ENCODE measurements at regions of chr2 and their contacts with region 1.

Region 1: DNA sequence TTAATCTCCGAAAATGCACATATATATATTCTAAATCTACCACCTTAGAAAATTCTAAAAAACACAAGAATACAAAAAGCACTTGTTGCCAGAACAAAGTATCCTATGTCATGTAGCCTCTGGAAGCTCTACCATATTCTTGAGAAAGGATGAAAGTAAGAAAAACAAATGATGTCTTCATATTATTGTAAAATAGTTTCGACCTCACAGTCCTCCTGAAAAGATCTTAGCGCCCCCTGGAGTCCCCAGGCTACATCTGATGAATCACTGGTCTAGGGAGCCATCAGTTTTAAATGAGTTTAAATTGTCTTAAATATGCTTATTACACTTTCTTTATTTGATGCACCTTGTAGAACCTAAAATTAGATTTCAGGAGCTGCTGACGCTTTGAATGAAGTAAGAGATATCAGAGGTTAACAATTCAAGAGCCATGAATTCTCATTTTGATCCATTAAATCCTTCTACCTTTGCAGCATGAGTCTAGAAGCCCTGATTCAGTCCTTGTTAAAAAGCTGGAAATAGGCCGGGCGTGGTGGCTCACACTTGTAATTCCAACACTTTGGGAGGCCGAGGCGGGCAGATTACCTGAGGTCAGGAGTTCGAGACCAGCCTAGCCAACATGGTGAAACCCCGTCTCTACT is 138.8 kb downstream of the MCFD2 start:
- DNase-seq: peak; percentile 71
- H3K4me3 ChIP-seq: no peak overlapping the region
- H3K27ac ChIP-seq: peak overlapping the region in 1 of 2 experiments; percentile 60; a peak in 1 of 4 replicates
- H3K4me1 ChIP-seq: peaks cover 7 to 37% of the 10 kb centered on the region in 2 experiments; a peak in 2 of 4 replicates
- H3K27me3 ChIP-seq: no peaks in the 10 kb centered on the region
- CTCF ChIP-seq: peak; percentile 94
- EP300 ChIP-seq: no peak
- RAD21 ChIP-seq: peak; percentile 80

Region 2: GRCh38 chr2:46657042-46657504 is 119.7 kb before region 1 on chr2:
- CTCF ChIA-PET with region 1: interaction called, 53 read pairs
- POLR2A ChIA-PET with region 1: no interaction called
- DNase-seq: peak; percentile 52
- H3K4me3 ChIP-seq: no peak overlapping the region
- H3K27ac ChIP-seq: no peak overlapping the region
- H3K4me1 ChIP-seq: peaks cover 7 to 18% of the 10 kb centered on the region in 2 experiments; a peak in 2 of 4 replicates
- H3K27me3 ChIP-seq: no peaks in the 10 kb centered on the region
- CTCF ChIP-seq: peak; percentile 67
- EP300 ChIP-seq: no peak
- RAD21 ChIP-seq: peak; percentile 68

Region 3: DNA sequence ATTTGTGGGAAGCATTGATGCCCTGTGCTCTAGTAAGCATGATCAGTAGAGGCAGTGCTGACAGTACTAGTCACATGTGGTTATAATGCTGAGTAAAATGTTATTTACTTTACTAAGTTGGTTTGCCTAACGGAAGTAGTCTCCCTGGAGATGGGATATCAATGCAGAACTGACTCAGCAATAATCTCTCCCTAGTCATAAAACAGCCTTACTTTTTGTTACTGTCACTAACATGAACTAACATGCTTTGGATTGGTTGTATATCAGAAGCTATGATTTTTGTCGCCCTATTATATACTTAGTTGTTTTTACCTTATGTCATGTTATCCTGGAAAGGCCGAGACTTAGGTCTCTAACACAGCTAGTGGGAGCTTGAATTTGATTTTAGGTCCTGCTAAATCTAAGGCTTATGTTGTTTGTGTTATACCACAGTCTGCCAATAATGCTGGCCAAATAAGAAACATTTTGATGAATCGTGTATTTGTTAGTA is 27.7 kb before region 1 on chr2:
- CTCF ChIA-PET with region 1: interaction called, 24 read pairs
- POLR2A ChIA-PET with region 1: no interaction called
- DNase-seq: no peak
- H3K4me3 ChIP-seq: no peak overlapping the region
- H3K27ac ChIP-seq: peak overlapping the region; percentile 40 to 68
- H3K4me1 ChIP-seq: peaks cover 11 to 55% of the 10 kb centered on the region in 2 experiments; a peak in 3 of 4 replicates
- H3K27me3 ChIP-seq: no peaks in the 10 kb centered on the region
- CTCF ChIP-seq: no peak
- EP300 ChIP-seq: no peak
- RAD21 ChIP-seq: no peak

Region 4: DNA sequence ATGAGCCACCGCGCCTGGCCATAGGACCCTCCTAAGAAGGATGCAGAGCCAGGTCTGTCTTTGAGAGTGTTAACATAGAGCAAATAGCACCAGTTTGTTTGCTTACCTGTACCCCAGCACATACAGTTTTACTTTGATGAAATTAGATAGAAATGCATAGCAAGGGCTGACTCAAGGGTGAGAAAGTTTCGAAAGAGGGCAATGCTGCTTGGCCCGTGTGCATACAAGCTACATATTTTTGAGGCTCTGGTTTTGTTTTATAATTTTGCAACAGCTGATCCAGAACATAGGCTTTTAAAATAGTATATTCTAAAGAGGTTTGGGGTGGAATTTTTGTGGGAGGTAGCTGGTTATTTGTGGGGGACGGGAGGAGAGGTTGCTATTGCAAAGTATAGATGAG is 12.9 kb before region 1 on chr2:
- CTCF ChIA-PET with region 1: interaction called, 36 read pairs
- POLR2A ChIA-PET with region 1: no interaction called
- DNase-seq: no peak
- H3K4me3 ChIP-seq: no peak overlapping the region
- H3K27ac ChIP-seq: no peak overlapping the region
- H3K4me1 ChIP-seq: peaks cover 3 to 13% of the 10 kb centered on the region in 2 experiments
- H3K27me3 ChIP-seq: no peaks in the 10 kb centered on the region
- CTCF ChIP-seq: no peak
- EP300 ChIP-seq: no peak
- RAD21 ChIP-seq: no peak

Region 5: GRCh38 chr2:46793423-46794416 is 16.9 kb after region 1 on chr2:
- CTCF ChIA-PET with region 1: interaction called, 19 read pairs
- POLR2A ChIA-PET with region 1: no interaction called
- DNase-seq: no peak
- H3K4me3 ChIP-seq: no peak overlapping the region
- H3K27ac ChIP-seq: no peak overlapping the region
- H3K4me1 ChIP-seq: peaks cover 0 to 9% of the 10 kb centered on the region in 2 experiments; a peak in 2 of 4 replicates
- H3K27me3 ChIP-seq: no peaks in the 10 kb centered on the region
- CTCF ChIP-seq: no peak
- EP300 ChIP-seq: no peak
- RAD21 ChIP-seq: no peak

Region 6: DNA sequence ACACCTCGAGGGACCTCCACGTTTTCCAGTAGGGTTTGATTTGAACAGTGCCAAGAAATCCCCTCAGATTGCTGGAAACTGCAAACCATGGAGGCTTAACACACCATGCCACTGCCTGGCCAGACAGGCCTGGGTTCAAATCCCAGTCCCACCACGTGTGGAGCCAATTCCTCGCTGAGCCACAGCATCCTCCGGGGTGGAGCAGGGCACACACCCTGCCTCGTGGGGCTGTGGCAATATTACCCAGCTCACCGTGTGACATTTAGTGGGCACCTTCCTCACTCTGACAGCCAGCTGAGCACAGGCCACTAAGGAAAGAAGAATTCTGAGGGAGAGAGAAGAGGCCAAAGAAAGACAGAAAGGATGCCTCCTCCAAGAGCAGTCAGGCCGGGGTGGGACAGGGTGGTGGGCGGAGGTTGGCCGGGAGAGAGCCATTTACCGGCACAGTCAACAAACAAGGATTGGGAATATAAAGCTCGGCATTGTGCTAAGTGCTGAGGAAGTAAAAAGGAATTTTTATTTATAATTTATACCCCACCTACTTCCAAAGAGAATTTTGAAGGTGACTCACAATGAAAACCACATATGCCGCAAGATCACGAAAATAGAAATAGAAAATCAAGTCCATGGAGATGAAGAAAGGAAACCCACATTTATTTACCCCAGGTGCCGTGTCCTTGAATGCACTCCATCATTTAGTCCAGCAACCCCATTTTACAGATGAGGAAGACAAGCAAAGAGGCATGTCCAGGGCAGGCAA is 27.3 kb after region 1 on chr2:
- CTCF ChIA-PET with region 1: interaction called, 19 read pairs
- POLR2A ChIA-PET with region 1: no interaction called
- DNase-seq: peak; percentile 30
- H3K4me3 ChIP-seq: no peak overlapping the region
- H3K27ac ChIP-seq: peak overlapping the region; percentile 48 to 100
- H3K4me1 ChIP-seq: peaks cover 14 to 74% of the 10 kb centered on the region in 2 experiments; a peak in 3 of 4 replicates
- H3K27me3 ChIP-seq: no peaks in the 10 kb centered on the region
- CTCF ChIP-seq: no peak
- EP300 ChIP-seq: peak; percentile 73 to 99; a peak in 3 of 4 replicates
- RAD21 ChIP-seq: no peak

Region 7: GRCh38 chr2:46825231-46825943 is 48.6 kb after region 1 on chr2:
- CTCF ChIA-PET with region 1: no interaction called
- POLR2A ChIA-PET with region 1: no interaction called
- DNase-seq: no peak
- H3K4me3 ChIP-seq: no peak overlapping the region
- H3K27ac ChIP-seq: no peak overlapping the region
- H3K4me1 ChIP-seq: no peaks in the 10 kb centered on the region; a peak in 1 of 4 replicates
- H3K27me3 ChIP-seq: no peaks in the 10 kb centered on the region
- CTCF ChIP-seq: no peak
- EP300 ChIP-seq: no peak
- RAD21 ChIP-seq: no peak

Region 8: GRCh38 chr2:46876741-46877384 is 100.1 kb after region 1 on chr2:
- CTCF ChIA-PET with region 1: interaction called, 10 read pairs
- POLR2A ChIA-PET with region 1: no interaction called
- DNase-seq: peak; percentile 73
- H3K4me3 ChIP-seq: no peak overlapping the region
- H3K27ac ChIP-seq: peak overlapping the region; percentile 7 to 76
- H3K4me1 ChIP-seq: peaks cover 35 to 38% of the 10 kb centered on the region in 2 experiments; a peak in 3 of 4 replicates
- H3K27me3 ChIP-seq: no peaks in the 10 kb centered on the region
- CTCF ChIP-seq: peak; percentile 80
- EP300 ChIP-seq: no peak
- RAD21 ChIP-seq: peak; percentile 91

Measured in SK-N-SH (cell line).